ENCODE measurements at regions of chr10 and their contacts with region 1.

Region 1: DNA sequence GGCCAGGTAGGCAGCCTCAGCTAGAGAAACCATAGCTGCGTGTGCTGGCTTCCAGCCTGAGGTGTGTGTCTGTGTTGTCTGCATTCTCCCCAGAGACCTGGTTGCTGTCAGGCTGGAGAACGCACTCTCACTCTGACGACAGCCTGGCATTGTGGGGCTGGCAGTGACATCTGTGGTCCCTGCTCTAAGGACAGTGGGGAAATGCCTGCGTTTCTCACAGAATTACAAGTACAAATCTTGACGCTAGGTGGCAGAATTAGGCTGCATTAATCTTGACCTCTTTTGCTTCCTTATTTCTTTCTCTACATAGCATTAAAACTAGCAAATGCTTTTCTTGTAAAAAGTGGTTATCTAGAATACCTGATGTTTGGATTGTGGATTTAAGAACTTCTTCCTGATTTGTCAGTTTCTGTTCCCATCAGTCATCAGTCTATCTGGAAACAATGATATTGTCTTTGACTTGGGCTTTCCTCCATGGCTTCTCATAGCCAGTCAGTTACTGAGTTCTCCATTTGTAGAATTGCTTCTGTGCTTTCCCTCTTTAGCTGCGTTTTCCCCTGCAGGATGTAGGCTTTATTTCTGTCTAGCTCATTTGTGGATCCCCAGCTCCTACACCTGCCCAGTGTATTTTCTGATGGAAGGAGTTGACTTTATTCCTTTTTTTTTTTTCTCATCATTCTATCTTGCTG is 86.0 kb downstream of the FANK1 start:
- DNase-seq: peak; percentile 9
- ATAC-seq: peak; percentile 51
- H3K4me3 Mint-ChIP-seq: no peak overlapping the region
- H3K27ac Mint-ChIP-seq: no peak overlapping the region
- H3K4me1 Mint-ChIP-seq: no peaks in the 10 kb centered on the region
- H3K27me3 Mint-ChIP-seq: peaks cover 6% of the 10 kb centered on the region
- CTCF ChIP-seq: peak; percentile 67

Region 2: DNA sequence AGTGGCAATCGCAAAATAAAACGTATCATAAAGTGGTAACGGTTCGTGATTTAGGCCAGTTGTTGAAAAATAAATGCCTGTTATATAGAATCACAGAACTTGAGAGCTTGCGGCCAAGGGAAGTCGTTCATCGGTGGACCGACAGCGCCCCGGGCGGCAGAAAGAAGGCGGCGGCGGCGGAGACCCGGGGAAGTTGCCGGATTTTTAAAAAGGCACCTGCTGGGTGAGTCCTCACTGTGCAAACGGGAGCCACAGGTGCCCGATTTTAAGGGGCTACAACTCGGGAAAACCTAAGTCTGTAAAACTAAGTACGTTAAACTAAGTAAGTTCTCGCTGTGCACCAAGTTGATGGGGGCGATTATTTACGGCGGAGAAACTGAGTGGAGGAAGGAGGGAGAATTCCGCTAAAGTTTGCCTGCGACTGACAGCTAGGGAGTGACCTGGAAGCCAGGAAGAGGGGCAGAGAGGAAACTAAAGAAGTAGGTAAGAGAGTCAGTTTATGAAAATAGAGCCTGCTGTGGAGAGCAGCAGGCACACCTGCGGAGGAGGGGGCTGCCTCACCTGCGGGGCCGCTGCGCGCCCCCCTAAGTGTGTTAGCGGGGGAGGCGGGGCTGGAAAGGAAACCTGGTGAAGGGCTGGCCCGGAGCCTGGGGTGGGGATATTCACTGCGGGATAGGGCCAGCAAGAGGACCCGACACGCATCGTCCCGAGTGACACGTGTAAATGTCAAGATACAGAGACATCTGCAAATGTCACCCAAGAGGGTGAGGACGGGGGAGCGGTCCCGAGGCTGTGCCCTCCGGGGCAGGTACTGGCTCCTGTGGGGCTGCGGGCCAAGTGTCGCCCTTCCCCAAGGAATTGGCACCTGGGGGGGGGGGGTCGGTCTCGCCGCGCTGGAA is 404.9 kb after region 1 on chr10:
- CTCF ChIA-PET with region 1: no interaction called
- POLR2A ChIA-PET with region 1: no interaction called
- intact Hi-C with region 1: loop called (anchors 5 kb)
- DNase-seq: peak; percentile 58
- ATAC-seq: no peak
- H3K4me3 Mint-ChIP-seq: peak overlapping the region; percentile 48
- H3K27ac Mint-ChIP-seq: no peak overlapping the region
- H3K4me1 Mint-ChIP-seq: peaks cover 8% of the 10 kb centered on the region
- H3K27me3 Mint-ChIP-seq: peaks cover 34% of the 10 kb centered on the region
- CTCF ChIP-seq: peak; percentile 56

Region 3: DNA sequence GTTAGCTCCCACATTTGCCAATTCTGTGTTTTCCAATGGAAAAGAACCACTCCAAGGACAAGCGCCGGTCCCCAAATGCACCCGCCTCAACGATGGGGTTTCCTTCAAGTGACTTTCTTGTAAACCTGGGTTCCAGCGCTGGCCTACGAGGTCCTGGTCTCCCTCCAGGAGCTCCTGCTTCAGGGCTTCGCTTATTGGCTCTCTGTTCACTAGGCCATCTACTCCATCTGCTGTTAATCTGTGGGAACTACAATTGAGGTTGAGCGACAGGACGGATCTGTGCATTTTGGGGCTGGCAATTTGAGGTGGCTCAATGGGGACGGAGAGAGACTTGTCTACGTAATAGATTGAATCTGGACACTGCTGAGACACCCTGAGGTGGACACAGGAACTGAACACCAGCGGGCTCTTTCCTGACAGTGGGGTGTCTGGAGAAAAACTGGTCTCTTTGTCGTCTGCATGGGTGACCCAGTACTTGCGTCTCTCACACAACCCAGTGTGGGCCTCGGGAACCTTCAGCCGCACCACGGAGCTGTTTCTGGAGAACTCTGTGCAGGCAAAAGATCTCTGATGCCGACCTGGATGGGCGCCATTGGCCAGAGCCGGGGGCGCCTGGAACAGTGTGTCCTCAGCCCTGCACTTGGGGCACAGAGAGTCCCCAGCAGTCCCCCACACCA is 521.8 kb after region 1 on chr10:
- CTCF ChIA-PET with region 1: interaction called, 7 read pairs
- POLR2A ChIA-PET with region 1: no interaction called
- intact Hi-C with region 1: loop called (anchors 5 kb)
- DNase-seq: no peak
- ATAC-seq: no peak
- H3K4me3 Mint-ChIP-seq: no peak overlapping the region
- H3K27ac Mint-ChIP-seq: no peak overlapping the region
- H3K4me1 Mint-ChIP-seq: no peaks in the 10 kb centered on the region
- H3K27me3 Mint-ChIP-seq: no peaks in the 10 kb centered on the region
- CTCF ChIP-seq: no peak